ENCODE measurements at regions of chr2 and their contacts with region 1.

Region 1: GRCh38 chr2:99451280-99451679 is 38.5 kb downstream of the REV1 start:
- DNase-seq: no peak
- CTCF ChIP-seq: no peak

Region 2: DNA sequence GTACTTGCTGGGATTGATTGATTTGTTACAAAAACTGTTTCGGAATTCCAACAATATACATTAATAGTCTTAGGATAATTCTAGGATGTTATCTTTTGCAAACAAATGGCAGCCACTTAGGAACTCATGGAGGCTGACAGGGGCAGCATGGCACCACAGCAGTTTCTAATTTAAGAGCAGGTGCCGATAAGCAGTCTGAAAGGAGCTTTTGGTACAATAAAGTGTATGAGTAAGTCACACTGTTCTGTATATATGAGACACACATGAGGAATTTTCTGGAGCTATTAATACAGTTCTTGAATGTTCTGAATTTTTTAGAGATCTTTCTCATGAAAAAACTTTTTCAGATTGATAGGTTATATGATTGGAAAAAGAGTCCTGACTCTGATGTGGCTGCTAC is 61.9 kb before region 1 on chr2:
- CTCF ChIA-PET with region 1: no interaction called
- POLR2A ChIA-PET with region 1: interaction called, 11 read pairs
- DNase-seq: no peak
- CTCF ChIP-seq: no peak

Region 3: DNA sequence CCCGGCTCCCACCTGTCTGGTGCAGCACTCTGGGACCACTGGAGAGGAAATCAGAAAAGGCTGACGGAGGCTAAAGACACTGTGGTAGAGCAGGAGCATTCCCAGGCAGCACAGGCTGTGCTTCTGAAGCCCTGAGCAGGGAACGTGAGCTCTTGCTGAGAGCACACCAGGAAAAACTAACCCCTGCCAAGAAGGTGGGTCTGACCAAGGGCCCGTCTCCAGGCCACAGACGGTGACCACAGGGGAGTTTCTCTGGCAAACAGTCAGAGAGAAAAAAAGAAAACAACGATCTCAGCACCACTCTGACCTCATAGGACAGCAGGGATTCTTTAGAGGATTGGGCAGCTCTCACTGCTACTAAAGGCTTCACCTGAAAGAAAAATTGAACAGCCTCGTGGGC is 489.7 kb after region 1 on chr2:
- CTCF ChIA-PET with region 1: no interaction called
- POLR2A ChIA-PET with region 1: no interaction called
- DNase-seq: no peak
- CTCF ChIP-seq: no peak

Region 4: DNA sequence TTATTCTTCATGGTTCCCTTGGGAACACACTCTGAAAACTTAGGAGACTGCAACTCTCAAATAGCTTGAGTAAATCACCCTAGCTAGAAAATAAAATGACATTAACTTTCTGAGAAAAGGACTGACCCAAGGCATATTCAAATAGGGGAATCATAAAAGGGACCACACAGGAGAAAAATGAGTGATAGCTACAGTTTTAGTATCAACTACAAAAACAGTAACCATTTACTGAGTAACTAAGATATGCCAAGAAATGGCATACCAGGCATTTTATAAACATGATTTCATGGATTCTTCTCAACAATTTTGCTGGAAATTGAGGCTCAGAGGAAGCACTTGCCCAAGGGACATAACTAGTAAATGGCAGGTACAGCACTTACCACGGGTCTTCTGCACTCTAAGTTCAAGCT is 606.6 kb after region 1 on chr2:
- CTCF ChIA-PET with region 1: no interaction called
- POLR2A ChIA-PET with region 1: no interaction called
- DNase-seq: no peak
- CTCF ChIP-seq: no peak